AG04450 (cell line): ENCODE measurements at regions of chr4 and their contacts with region 1.

Region 1: DNA sequence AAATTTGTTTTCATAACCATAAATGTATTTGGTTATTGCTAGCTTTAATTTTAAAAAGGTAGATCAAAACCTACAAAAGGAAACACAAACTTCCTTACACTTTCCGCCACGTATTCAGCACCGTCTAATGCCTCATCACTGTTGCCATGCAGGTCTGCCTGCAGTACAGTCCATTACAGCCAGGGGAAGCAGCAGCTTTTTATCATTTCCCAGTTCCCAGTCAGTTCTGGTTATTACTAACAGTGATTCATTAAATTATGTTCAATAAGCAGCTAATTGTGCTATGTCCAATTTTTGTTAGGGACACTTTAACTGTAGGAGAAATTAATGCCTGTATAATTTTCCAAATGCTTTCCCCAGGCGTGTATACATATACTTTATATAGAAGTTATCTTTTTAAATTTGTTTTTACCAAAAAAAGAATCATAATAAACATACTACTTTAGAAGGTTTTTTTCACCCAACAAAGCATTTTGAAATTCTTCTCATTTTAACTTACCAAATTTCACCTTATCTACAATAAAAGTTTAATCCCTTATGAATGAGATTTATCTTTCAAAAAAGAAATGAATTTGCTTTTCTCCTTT is 93.3 kb downstream of the ANXA3 start:
- DNase-seq: peak; percentile 56
- H3K4me3 ChIP-seq: no peak overlapping the region
- H3K27ac ChIP-seq: peak overlapping the region; percentile 97
- H3K27me3 ChIP-seq: no peaks in the 10 kb centered on the region
- CTCF ChIP-seq: peak; percentile 96

Region 2: DNA sequence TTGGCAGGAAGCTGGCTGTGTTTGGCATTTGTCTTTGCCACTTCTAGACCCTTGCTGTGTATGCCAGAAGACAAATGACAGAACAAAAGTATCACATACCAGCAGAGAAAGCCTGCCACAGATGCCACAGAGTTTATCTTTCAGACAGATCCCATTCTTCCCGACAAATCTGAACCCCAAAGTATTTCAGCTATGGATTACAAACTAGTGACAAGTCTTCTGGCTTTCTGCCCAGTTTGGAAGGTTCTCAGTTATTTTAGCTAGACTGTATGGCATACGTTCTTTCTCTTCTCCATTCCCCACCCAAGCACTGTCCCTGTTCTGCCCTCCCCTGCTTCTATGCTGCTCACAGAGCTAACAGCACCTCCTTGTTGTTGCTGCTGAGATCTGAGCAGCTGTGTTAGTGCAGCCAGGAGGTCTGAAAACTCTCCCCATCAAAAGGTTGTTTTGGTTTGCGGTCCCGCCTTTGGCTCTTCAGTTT is 351.0 kb before region 1 on chr4:
- CTCF ChIA-PET with region 1: no interaction called
- POLR2A ChIA-PET with region 1: no interaction called
- DNase-seq: peak; percentile 48
- H3K4me3 ChIP-seq: no peak overlapping the region
- H3K27ac ChIP-seq: no peak overlapping the region
- H3K27me3 ChIP-seq: no peaks in the 10 kb centered on the region
- CTCF ChIP-seq: no peak

Region 3: GRCh38 chr4:78602334-78602733 is 42.5 kb before region 1 on chr4:
- CTCF ChIA-PET with region 1: interaction called, 11 read pairs
- POLR2A ChIA-PET with region 1: no interaction called
- DNase-seq: no peak
- H3K4me3 ChIP-seq: no peak overlapping the region
- H3K27ac ChIP-seq: no peak overlapping the region
- H3K27me3 ChIP-seq: no peaks in the 10 kb centered on the region
- CTCF ChIP-seq: no peak

Region 4: DNA sequence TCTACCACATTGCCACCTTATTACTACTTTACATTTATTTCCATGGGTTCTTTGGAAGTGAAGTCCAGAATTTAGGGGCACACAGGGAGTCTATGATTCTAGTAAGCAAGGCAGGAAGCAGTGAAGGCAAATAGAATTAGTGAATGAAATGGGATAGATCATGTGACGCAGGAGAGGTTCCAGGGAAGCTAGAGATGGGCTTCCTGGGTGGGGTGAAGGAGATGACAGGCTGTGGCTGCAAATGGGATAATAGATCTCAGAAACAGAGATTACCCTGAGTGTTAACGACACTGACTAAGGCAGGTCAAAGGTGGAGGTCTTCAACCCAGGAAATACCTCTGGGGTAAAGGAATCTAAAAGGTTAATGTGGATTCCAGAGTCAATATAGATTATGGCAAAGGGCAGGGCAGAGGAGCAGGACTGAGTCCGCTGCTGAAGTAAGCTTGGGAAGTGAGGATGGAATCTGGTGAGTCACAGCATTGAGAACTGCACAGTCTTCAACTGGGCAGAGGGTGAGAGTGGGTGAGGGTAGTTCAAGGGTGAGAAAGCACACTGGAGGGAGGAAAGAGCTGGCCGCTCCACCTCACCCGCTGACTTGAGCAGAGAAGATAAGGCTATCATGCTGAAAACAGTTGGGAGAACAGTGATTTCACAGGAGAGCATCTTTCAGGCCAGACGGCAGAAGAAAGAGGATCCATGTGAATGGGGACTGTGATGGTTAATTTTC is 22.4 kb before region 1 on chr4:
- CTCF ChIA-PET with region 1: interaction called, 38 read pairs
- POLR2A ChIA-PET with region 1: interaction called, 3 read pairs
- DNase-seq: no peak
- H3K4me3 ChIP-seq: no peak overlapping the region
- H3K27ac ChIP-seq: no peak overlapping the region
- H3K27me3 ChIP-seq: no peaks in the 10 kb centered on the region
- CTCF ChIP-seq: no peak

Region 5: GRCh38 chr4:78661921-78662521 is 17.2 kb after region 1 on chr4:
- CTCF ChIA-PET with region 1: interaction called, 24 read pairs
- POLR2A ChIA-PET with region 1: interaction called, 4 read pairs
- DNase-seq: no peak
- H3K4me3 ChIP-seq: no peak overlapping the region
- H3K27ac ChIP-seq: no peak overlapping the region
- H3K27me3 ChIP-seq: no peaks in the 10 kb centered on the region
- CTCF ChIP-seq: no peak

Region 6: GRCh38 chr4:78720151-78720726 is 75.4 kb after region 1 on chr4:
- CTCF ChIA-PET with region 1: no interaction called
- POLR2A ChIA-PET with region 1: no interaction called
- DNase-seq: no peak
- H3K4me3 ChIP-seq: no peak overlapping the region
- H3K27ac ChIP-seq: no peak overlapping the region
- H3K27me3 ChIP-seq: no peaks in the 10 kb centered on the region
- CTCF ChIP-seq: no peak

Region 7: DNA sequence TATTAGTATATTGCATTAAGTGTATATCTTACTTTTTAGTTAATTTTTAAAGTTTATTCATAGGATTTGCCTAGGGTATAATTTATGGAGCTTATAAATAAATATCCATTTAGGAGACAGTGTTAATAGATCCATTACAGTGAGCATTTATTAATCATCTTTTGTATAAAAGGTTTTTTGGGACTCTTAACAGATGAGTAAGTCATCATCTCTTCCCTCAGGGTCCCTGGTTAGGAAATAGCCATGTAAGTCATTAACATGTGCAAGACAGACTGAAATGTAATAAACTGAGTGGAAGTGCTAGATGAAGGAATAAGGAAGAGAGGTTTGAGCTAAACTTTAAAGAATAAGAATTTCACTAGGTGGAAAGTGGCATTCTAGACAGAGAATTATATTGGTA is 225.2 kb after region 1 on chr4:
- CTCF ChIA-PET with region 1: interaction called, 12 read pairs
- POLR2A ChIA-PET with region 1: no interaction called
- DNase-seq: no peak
- H3K4me3 ChIP-seq: no peak overlapping the region
- H3K27ac ChIP-seq: no peak overlapping the region
- H3K27me3 ChIP-seq: no peaks in the 10 kb centered on the region
- CTCF ChIP-seq: no peak